Breast epithelium (tissue), 4 donors: ENCODE measurements at regions of chr17 and their contacts with region 1.

Region 1: GRCh38 chr17:14052886-14053615 is 16.3 kb upstream of the COX10 start:
- DNase-seq: no peak
- H3K4me3 ChIP-seq: no peak overlapping the region
- H3K27ac ChIP-seq: no peak overlapping the region
- H3K4me1 ChIP-seq: no peaks in the 10 kb centered on the region
- H3K27me3 ChIP-seq: no peaks in the 10 kb centered on the region
- CTCF ChIP-seq: no peak
- POLR2A ChIP-seq: no peak

Region 2: DNA sequence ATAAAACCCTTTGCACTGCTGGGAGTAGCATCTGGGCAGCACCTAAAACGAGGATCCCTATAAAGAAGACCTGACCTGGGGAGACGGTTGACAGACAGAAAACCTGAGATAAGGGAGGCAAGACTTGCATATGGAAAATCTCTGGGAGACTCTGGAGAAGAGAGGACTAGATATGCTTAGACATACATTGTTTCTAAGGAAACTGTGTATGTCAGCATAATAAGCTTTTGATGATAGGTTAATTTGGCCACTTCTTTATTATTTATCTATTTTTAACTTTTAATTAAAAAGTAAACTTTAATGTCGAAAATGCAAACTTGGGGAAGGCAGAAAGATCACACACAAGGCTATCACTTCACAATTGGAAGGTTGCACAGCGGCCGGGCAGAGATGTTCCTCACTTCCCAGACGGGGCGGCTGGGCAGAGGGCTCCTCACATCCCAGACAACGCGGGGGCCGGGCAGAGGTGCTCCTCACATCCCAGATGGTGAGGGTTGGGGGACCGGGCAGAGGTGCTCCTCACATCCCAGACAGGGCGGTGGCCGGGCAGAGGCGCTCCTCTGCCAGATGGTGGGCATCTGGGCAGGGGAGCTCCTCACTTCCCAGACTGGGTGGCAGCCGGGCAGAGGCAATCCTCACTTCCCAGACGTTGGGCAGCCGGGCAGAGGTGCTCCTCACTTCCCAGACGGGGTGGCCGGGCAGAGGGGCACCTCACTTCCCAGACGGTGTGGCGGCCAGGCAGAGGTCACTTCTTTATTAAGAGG is 387.0 kb before region 1 on chr17:
- intact Hi-C with region 1: loop called (anchors 5 kb)
- DNase-seq: no peak
- H3K4me3 ChIP-seq: no peak overlapping the region
- H3K27ac ChIP-seq: no peak overlapping the region
- H3K4me1 ChIP-seq: no peaks in the 10 kb centered on the region
- H3K27me3 ChIP-seq: no peaks in the 10 kb centered on the region
- CTCF ChIP-seq: no peak
- POLR2A ChIP-seq: no peak

Region 3: DNA sequence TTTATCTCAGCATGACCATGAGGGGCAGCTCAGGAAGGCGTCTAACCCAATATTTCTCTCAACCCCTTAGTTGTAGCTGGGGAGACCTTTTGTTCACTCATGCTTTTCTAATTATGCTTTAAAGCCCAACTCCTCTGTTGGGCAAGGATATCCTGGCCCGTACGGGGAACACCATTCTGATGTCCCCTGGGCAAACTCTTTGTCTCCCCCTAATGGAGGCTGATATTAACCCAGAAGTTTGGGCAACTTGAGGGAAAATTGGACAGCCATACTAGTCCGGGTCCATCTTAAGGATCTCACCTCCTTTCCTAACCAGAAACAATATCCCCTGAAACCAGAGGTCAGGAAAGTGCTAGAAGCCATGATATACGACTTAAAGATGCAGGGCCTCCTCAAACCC is 127.5 kb before region 1 on chr17:
- intact Hi-C with region 1: no loop called
- DNase-seq: no peak
- H3K4me3 ChIP-seq: no peak overlapping the region
- H3K27ac ChIP-seq: no peak overlapping the region
- H3K4me1 ChIP-seq: no peaks in the 10 kb centered on the region
- H3K27me3 ChIP-seq: no peaks in the 10 kb centered on the region
- CTCF ChIP-seq: no peak
- POLR2A ChIP-seq: no peak